BJ (cell line): ENCODE measurements at regions of chr3 and their contacts with region 1.

Region 1: GRCh38 chr3:49539659-49540560 is 14.4 kb upstream of the BSN start:
- DNase-seq: peak; percentile 60
- H3K4me3 ChIP-seq: peak overlapping the region; percentile 43
- H3K27me3 ChIP-seq: peaks cover 2% of the 10 kb centered on the region
- CTCF ChIP-seq: peak; percentile 90

Region 2: GRCh38 chr3:49397470-49397869 is 142.4 kb before region 1 on chr3:
- CTCF ChIA-PET with region 1: no interaction called
- POLR2A ChIA-PET with region 1: no interaction called
- DNase-seq: no peak
- H3K4me3 ChIP-seq: no peak overlapping the region
- H3K27me3 ChIP-seq: no peaks in the 10 kb centered on the region
- CTCF ChIP-seq: no peak

Region 3: GRCh38 chr3:49469936-49470713 is 69.8 kb before region 1 on chr3 and contains the start of gene DAG1:
- CTCF ChIA-PET with region 1: interaction called, 14 read pairs
- POLR2A ChIA-PET with region 1: interaction called, 4 read pairs
- DNase-seq: peak; percentile 84
- H3K4me3 ChIP-seq: peak within 1 kb of the TSS; percentile 65
- H3K27me3 ChIP-seq: no peaks in the 10 kb centered on the region
- CTCF ChIP-seq: no peak
- polyA plus RNA-seq, gene DAG1: 71.4 and 144 TPM in 2 replicates

Region 4: DNA sequence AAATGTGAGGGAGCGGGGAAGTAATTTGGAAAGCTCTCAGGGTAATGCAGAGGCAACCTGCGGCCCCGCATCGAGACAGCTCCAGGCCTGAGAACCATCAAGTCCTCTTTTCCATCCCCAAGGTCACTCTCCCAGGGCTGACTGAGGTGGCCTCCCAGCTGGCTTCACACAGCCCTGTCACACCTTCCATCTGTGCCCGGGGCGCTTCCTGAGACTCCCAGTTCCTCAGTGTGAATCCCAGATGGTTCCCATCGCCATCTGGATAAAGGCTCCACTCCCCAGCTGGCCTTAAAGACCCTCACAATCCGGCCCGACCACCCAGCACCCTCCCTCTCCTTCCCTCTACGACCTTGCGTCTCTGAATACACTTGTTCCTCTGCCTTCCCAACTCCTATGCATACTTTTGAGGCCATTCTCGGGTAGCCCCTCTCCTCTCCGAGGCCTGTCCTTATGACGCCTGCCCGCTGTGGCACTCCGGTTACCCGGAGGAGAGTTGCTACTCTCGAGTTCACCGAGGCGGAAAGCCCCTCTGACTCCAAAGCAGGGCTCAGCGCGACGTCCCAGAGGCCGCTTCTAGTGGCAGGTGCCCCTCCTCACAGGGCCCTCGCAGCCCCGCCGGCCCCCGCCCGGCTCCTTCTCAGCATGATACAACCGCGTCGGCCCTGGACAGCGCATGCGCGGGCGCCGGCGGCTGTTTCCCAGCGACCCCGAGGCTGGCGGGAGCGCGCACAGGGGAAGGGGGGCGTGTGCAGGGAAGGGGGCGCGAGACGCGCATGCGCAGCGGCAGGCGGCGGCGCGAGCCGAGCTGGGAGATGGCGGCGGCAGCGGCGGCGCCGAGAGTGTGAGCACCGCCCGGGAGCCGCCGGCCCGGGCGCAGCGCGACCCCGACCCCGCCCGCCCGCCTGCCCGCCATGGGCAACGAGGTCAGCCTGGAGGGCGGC is 14.1 kb after region 1 on chr3 and contains the start of gene BSN:
- CTCF ChIA-PET with region 1: interaction called, 23 read pairs
- POLR2A ChIA-PET with region 1: no interaction called
- DNase-seq: peak; percentile 30
- H3K4me3 ChIP-seq: peak within 1 kb of the TSS; percentile 64
- H3K27me3 ChIP-seq: peaks cover 11% of the 10 kb centered on the region
- CTCF ChIP-seq: no peak
- polyA plus RNA-seq, gene BSN: 0.01 and 0.04 TPM in 2 replicates

Region 5: GRCh38 chr3:49656541-49657112 is 116.7 kb after region 1 on chr3:
- CTCF ChIA-PET with region 1: interaction called, 10 read pairs
- POLR2A ChIA-PET with region 1: no interaction called
- DNase-seq: no peak
- H3K4me3 ChIP-seq: no peak overlapping the region
- H3K27me3 ChIP-seq: peaks cover 4% of the 10 kb centered on the region; the same call in 1 of the 2 replicates
- CTCF ChIP-seq: 0 out of 2 replicates have a peak, but pooled peaks have one; percentile 23

Region 6: DNA sequence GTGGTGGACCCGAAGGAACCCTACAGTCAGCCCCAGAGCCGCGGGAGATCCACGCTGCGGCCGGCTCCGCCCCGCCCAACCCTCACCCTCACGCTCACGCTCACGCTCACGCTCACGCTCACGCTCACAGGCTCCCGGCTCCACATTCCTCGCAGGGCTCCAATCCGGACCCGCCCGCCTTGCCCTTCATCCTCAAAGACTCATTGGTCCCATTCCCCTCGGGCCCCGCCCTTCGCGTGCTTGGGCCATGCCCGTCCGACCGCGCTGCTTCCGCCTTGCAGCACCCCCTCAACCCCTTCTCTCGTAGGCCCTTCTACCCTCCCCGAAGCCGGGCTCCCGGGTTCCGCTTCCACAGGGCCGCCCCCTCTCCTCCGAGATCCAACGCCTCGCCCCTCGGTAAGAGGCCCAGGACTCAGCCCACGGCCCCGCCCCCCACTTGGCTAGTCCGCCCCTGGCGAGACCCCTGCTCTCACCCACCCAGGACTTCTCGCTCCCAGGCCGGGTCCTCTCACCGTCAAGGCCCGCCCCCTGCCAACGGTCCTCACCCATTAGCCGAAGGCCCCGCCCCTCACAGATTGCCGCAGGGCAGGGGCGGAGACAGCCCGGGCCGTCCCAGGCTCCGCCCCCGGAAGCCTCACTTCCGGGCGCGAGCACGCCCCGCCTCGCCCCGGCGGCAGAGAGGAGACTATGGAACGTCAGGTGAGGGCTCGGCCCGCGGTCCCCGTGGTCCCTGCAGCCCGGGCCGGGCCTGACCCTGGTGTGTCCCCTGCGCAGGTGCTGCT is 134.0 kb after region 1 on chr3 and contains the start of gene APEH:
- CTCF ChIA-PET with region 1: interaction called, 152 read pairs
- POLR2A ChIA-PET with region 1: interaction called, 3 read pairs
- DNase-seq: peak; percentile 86
- H3K4me3 ChIP-seq: peak within 1 kb of the TSS; percentile 79
- H3K27me3 ChIP-seq: no peaks in the 10 kb centered on the region
- CTCF ChIP-seq: no peak
- polyA plus RNA-seq, gene APEH: 105 and 165 TPM in 2 replicates

Region 7: DNA sequence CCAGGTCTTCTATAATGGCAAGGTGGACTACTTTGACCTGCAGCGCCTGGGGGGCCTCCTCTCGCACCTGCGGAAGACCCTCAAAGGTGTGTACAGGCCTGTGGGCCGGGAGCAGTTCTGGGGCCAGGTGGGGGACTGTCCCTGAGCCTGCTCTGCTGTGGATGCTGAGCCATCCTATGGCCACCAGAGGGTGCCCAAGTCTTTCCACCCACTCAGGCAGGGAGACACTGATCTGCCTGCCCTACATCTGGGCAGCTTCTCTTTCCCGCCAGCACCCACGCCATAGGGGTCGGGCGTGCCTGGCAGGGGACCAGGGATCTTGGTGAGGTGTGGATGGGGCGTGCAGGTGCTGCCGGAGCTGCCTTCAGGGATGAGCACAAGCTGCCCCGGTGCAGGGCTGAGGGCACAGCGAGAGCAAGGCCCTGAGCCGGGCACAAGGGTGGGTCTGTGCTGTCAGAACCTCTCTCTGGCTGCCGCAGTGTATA is 163.6 kb after region 1 on chr3:
- CTCF ChIA-PET with region 1: interaction called, 11 read pairs
- POLR2A ChIA-PET with region 1: no interaction called
- DNase-seq: no peak
- H3K4me3 ChIP-seq: no peak overlapping the region
- H3K27me3 ChIP-seq: no peaks in the 10 kb centered on the region
- CTCF ChIP-seq: peak; percentile 93